ENCODE measurements at regions of chr2 and their contacts with region 1.

Region 1: GRCh38 chr2:230987137-230988020 is 8.5 kb upstream of the SPATA3 start:
- DNase-seq: peak; percentile 65 to 80 (median 75)
- H3K4me3 ChIP-seq: peak overlapping the region; percentile 62
- H3K4me3 Mint-ChIP-seq: peak overlapping the region in 6 of 7 donors; percentile 38 to 79 (median 58)
- H3K27ac ChIP-seq: no peak overlapping the region
- H3K27ac Mint-ChIP-seq: peak overlapping the region in 3 of 8 donors; percentile 15 to 68 (median 17)
- H3K4me1 ChIP-seq: peaks cover 9% of the 10 kb centered on the region
- H3K4me1 Mint-ChIP-seq: peaks cover 3 to 40% (median 25%) of the 10 kb centered on the region in 3 donors
- H3K27me3 ChIP-seq: no peaks in the 10 kb centered on the region
- H3K27me3 Mint-ChIP-seq: peaks cover 9 to 12% of the 10 kb centered on the region in 2 donors

Region 2: DNA sequence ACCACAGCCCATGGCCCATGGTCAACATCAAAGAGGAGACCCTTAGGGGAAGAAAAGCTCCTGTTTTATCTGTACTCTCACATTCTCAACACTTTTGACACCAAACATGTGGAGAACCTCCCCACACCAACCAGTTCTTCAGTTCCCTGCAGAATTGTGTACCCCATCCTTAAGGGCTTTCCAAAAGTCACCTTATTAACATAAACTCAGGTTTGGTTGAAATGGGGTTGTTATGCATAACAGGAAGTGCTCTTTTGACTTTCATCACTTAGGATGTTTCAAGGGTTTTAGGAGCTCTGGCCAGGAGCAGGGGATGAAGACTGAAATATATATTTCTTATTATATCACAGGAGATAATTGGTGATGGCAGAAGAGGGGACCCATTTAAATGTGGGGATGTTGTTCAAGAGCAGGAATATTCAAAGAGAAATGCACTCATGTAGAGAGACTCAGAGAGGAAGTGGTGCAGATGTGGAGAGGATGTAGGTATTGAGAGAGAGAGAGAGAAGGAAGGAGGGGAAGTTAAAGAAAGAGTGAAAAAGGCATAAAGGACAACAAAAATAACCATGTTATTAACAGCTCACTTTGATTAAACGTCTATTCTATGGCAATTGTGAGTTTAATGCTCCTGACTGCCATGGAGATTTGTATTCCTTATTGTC is 625.2 kb before region 1 on chr2:
- CTCF ChIA-PET with region 1: no interaction called
- POLR2A ChIA-PET with region 1: no interaction called
- DNase-seq: peak in 1 of 5 donors; percentile 12
- H3K4me3 ChIP-seq: no peak overlapping the region
- H3K4me3 Mint-ChIP-seq: peak overlapping the region in 5 of 7 donors; percentile 0 to 61 (median 3)
- H3K27ac ChIP-seq: no peak overlapping the region
- H3K27ac Mint-ChIP-seq: peak overlapping the region; percentile 6 to 89 (median 54)
- H3K4me1 ChIP-seq: peaks cover 17% of the 10 kb centered on the region
- H3K4me1 Mint-ChIP-seq: peaks cover 34 to 60% (median 51%) of the 10 kb centered on the region in 3 donors
- H3K27me3 ChIP-seq: no peaks in the 10 kb centered on the region
- H3K27me3 Mint-ChIP-seq: no peaks in the 10 kb centered on the region

Region 3: DNA sequence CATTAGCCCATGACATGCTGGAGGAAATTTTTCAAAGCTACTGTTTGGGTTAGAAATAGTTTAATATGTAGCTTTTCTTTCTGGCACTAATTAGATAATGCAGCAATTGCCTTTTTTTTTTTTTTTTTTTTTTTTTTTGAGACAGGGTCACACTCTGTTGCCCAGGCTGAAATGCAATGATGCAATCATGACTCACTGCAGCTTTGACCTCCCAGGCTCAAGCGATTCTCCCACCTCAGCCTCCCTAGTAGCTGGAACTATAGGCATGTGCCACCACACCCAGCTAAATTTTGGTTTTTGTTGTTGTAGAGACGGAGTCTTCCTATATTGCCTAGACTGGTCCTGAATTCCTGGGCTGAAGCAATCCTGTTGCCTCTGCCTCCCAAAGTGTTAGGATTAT is 435.2 kb before region 1 on chr2:
- CTCF ChIA-PET with region 1: no interaction called
- POLR2A ChIA-PET with region 1: no interaction called
- DNase-seq: no peak
- H3K4me3 ChIP-seq: no peak overlapping the region
- H3K4me3 Mint-ChIP-seq: no peak overlapping the region
- H3K27ac ChIP-seq: no peak overlapping the region
- H3K27ac Mint-ChIP-seq: no peak overlapping the region
- H3K4me1 ChIP-seq: no peaks in the 10 kb centered on the region
- H3K4me1 Mint-ChIP-seq: peaks cover 4 to 11% (median 11%) of the 10 kb centered on the region in 3 donors
- H3K27me3 ChIP-seq: no peaks in the 10 kb centered on the region
- H3K27me3 Mint-ChIP-seq: no peaks in the 10 kb centered on the region

Region 4: GRCh38 chr2:230824406-230824978 is 162.9 kb before region 1 on chr2:
- CTCF ChIA-PET with region 1: interaction called, 65 read pairs
- POLR2A ChIA-PET with region 1: no interaction called
- DNase-seq: peak in 4 of 5 donors; percentile 43 to 74 (median 68)
- H3K4me3 ChIP-seq: peak overlapping the region; percentile 35
- H3K4me3 Mint-ChIP-seq: peak overlapping the region in 6 of 7 donors; percentile 5 to 72 (median 46)
- H3K27ac ChIP-seq: no peak overlapping the region
- H3K27ac Mint-ChIP-seq: peak overlapping the region in 1 of 8 donors; percentile 45
- H3K4me1 ChIP-seq: no peaks in the 10 kb centered on the region
- H3K4me1 Mint-ChIP-seq: peaks cover 7 to 17% (median 8%) of the 10 kb centered on the region in 3 donors
- H3K27me3 ChIP-seq: peaks cover 17% of the 10 kb centered on the region
- H3K27me3 Mint-ChIP-seq: peaks cover 29 to 30% of the 10 kb centered on the region in 2 donors

Region 5: DNA sequence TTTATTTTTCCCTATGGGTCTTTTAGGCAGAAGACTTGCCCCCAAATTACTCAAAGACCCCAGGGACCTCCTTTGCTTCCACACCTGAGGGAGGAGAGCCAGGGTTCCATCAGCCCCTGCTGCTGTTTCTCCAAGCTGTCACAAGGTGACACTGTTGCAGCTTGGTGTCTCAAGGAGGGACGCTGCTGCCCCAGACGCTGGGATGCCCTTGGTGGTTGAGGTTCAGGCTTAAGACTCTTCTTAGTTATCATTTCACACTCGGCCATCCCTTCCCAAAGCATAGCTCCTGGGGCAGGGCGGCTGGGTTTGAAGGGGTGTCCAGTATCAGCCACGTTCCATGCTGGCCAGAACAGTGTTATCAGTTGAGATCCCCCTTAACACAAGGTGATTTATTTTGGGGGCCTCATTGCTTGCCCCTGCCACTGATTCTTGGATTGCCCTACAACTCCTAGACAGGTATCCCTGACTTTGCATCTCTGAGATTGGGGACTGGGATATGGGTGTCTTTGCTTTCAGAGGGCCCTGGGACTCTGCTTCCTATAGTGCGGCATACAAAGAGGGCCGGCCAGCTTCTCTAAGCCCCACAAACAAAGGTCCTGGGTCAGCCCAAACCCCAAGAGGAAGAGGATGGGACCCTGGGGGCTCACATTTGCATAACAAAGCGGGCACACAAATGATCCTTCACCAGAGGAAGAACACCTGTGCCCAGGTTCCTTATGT is 85.0 kb before region 1 on chr2:
- CTCF ChIA-PET with region 1: interaction called, 129 read pairs
- POLR2A ChIA-PET with region 1: interaction called, 9 read pairs
- DNase-seq: peak in 4 of 5 donors; percentile 27 to 67 (median 48)
- H3K4me3 ChIP-seq: no peak overlapping the region
- H3K4me3 Mint-ChIP-seq: no peak overlapping the region
- H3K27ac ChIP-seq: no peak overlapping the region
- H3K27ac Mint-ChIP-seq: no peak overlapping the region
- H3K4me1 ChIP-seq: peaks cover 18% of the 10 kb centered on the region
- H3K4me1 Mint-ChIP-seq: peaks cover 16 to 38% (median 28%) of the 10 kb centered on the region in 3 donors
- H3K27me3 ChIP-seq: no peaks in the 10 kb centered on the region
- H3K27me3 Mint-ChIP-seq: peaks cover 3 to 7% of the 10 kb centered on the region in 2 donors

Region 6: GRCh38 chr2:230947908-230948365 is 39.4 kb before region 1 on chr2:
- CTCF ChIA-PET with region 1: interaction called, 10 read pairs
- POLR2A ChIA-PET with region 1: no interaction called
- DNase-seq: no peak
- H3K4me3 ChIP-seq: no peak overlapping the region
- H3K4me3 Mint-ChIP-seq: peak overlapping the region in 1 of 7 donors; percentile 17
- H3K27ac ChIP-seq: no peak overlapping the region
- H3K27ac Mint-ChIP-seq: no peak overlapping the region
- H3K4me1 ChIP-seq: peaks cover 4% of the 10 kb centered on the region
- H3K4me1 Mint-ChIP-seq: peaks cover 17 to 64% (median 33%) of the 10 kb centered on the region in 3 donors
- H3K27me3 ChIP-seq: peaks cover 4% of the 10 kb centered on the region
- H3K27me3 Mint-ChIP-seq: peaks cover 5 to 7% of the 10 kb centered on the region in 2 donors

Region 7: DNA sequence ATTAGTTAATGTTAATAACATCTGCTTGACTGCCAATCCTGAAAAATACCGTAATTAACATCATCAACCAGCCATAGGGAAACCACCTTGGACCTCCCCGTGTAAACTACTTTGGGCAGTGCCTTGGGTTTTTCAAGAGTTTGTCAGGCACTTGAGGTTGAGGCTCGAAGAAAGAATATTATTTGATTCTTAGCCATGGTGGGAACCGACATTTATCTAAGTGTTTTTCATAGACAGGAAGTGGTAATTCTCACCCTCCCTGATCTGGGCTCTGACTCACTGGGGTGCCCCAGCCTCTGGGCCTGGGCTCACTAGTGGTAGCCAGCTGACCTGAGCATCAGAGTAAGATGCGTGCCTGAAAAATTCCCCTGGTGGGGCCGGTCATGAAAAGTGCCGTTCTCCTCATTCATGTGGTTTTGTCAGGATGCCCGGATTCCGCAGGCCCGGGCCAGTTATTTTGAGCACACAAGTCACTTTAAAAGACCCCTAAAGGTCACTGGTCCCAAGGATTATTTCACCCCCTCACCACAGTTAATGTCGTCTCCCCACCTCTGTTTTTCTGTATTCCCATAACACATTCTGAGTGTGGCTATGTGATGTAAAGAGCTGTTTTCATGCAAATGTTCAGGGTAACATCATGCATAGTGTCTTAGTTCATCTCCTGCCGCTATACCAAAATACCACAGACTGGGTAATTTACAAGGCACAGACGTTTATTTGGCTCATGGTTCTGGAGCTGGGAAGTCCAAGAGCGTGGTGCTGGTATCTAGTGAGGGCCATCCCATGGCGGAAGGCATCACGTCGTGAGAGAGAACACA is 13.1 kb before region 1 on chr2:
- CTCF ChIA-PET with region 1: interaction called, 24 read pairs
- POLR2A ChIA-PET with region 1: no interaction called
- DNase-seq: peak; percentile 49 to 92 (median 73)
- H3K4me3 ChIP-seq: peak overlapping the region; percentile 35
- H3K4me3 Mint-ChIP-seq: peak overlapping the region; percentile 12 to 83 (median 76)
- H3K27ac ChIP-seq: peak overlapping the region; percentile 33
- H3K27ac Mint-ChIP-seq: peak overlapping the region; percentile 93 to 99 (median 96)
- H3K4me1 ChIP-seq: peaks cover 23% of the 10 kb centered on the region
- H3K4me1 Mint-ChIP-seq: peaks cover 47 to 72% (median 66%) of the 10 kb centered on the region in 3 donors
- H3K27me3 ChIP-seq: no peaks in the 10 kb centered on the region
- H3K27me3 Mint-ChIP-seq: no peaks in the 10 kb centered on the region